ENCODE measurements at regions of chr22 and their contacts with region 1.

Region 1: DNA sequence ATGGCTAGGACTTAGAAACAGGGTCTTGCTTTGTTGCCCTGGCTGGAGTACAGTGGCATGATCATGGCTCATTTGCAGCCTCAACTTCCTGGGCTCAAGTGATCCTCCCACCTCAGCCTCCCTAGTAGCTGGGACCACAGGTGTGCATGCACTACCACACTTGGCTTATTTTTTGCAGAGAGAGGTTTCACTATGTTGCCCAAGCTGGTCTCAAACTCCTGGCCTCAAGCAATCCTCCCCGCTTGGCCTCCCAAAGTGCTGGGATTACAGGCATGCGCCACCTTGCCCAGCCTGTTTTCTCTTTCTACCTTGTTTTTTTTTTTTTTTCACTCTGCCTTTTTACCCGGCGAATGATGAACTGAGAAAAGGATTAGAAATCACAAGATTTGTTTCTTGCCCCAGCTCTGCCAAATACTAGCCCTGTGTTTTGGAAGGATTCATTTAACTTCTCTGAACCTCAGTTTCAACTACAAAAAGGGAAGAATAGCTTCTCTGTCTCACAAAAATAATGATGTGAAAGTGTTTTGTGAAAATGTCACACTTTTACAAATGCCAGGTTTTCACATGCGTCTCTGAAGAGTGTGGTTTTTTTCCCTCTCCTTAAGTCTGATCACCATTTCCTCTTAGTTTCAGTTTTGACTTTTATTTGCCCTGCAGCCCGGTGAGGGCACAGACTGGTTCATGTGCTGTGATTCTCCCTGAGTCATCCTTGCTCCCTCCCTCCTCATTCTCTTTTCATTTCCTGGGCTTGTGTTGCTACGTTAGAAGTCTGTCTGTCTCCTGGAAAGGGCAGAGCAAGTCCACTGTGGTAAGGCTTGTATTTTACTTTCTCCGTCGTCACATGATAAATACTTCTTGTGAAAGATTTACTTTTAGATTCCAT is 67.7 kb downstream of the BCL2L13 start:
- DNase-seq: peak; percentile 95
- H3K4me3 ChIP-seq: peak overlapping the region; percentile 27 to 38 (median 36)
- H3K27ac ChIP-seq: peak overlapping the region; percentile 71
- H3K4me1 ChIP-seq: peaks cover 19% of the 10 kb centered on the region
- H3K27me3 ChIP-seq: no peaks in the 10 kb centered on the region
- CTCF ChIP-seq: no peak

Region 2: DNA sequence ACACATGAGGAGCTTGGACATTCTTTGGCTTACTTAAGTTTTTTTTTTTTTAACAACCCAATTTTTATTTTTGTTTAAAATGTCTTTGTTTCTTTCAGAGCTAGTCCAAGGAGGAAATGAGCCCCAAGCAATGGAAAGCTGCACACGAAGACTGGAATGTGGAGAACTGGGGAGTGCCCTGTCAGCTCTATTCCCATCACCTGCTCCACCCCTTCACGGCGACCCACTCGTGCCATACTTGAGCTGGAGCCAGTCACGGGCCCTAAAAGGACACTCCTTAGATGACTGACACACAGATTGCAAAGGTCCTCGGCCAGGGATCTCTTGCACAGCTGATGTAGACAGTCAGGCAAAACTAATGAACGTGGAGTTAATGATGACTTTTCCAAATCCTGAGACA is 153.5 kb before region 1 on chr22:
- CTCF ChIA-PET with region 1: no interaction called
- dilution Hi-C with region 1: no loop called
- in situ Hi-C with region 1: no loop called
- intact Hi-C with region 1: loop called (anchors 5 kb)
- DNase-seq: no peak
- H3K4me3 ChIP-seq: no peak overlapping the region
- H3K27ac ChIP-seq: no peak overlapping the region
- H3K4me1 ChIP-seq: no peaks in the 10 kb centered on the region
- H3K27me3 ChIP-seq: no peaks in the 10 kb centered on the region
- CTCF ChIP-seq: no peak

Region 3: GRCh38 chr22:17606496-17606895 is 99.8 kb before region 1 on chr22:
- CTCF ChIA-PET with region 1: no interaction called
- dilution Hi-C with region 1: no loop called
- in situ Hi-C with region 1: no loop called
- intact Hi-C with region 1: no loop called
- DNase-seq: no peak
- H3K4me3 ChIP-seq: no peak overlapping the region
- H3K27ac ChIP-seq: no peak overlapping the region
- H3K4me1 ChIP-seq: no peaks in the 10 kb centered on the region
- H3K27me3 ChIP-seq: no peaks in the 10 kb centered on the region
- CTCF ChIP-seq: no peak

Region 4: DNA sequence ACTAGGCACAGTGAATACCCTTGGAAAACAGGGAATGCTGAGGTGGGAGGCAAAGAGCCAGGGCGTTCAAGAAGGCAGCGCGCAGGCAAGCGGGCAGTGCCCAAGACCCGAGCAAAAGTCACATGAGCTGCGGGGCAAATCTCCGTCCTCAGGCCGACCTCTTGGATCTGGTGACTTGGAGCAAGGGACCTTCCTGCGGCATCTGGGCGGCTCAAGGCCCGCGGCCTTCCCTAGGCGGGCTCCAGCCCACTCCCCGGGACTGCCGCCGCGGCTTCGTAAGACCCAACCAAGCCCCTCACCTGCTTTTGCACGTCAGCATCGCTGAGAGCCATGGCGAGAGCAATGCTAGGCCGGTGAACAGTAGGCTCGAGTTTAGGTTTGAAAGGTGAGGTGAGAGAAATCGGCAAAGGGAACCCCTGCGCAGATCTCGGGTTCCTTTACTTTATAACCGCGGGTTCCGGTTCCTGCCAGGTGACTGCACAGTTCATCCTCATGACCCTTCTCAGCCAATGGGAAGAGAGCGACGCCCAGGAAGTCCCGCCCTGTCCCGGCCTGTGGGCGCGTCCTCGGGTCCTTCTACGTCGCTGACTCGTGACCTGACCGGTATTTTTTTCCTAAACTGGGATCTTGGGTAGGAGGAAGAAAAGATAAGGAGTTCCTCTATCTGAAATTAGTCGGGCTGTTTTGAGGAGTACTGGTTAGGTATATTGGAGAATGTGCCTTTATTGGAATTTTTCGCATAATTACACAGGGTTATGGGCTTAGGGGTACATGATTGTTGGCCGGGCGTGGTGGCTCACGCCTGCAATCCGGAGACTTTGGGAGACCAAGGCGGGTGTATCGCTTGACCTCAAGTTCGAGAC is 77.7 kb before region 1 on chr22 and contains the start of gene ATP6V1E1:
- CTCF ChIA-PET with region 1: no interaction called
- dilution Hi-C with region 1: loop called (anchors 5 kb)
- in situ Hi-C with region 1: loop called in 1 of 2 experiments (anchors 10 kb)
- intact Hi-C with region 1: no loop called
- DNase-seq: peak; percentile 96
- H3K4me3 ChIP-seq: peak within 1 kb of the TSS; percentile 69 to 97 (median 93)
- H3K27ac ChIP-seq: peak within 1 kb of the TSS; percentile 97
- H3K4me1 ChIP-seq: peaks cover 21% of the 10 kb centered on the region
- H3K27me3 ChIP-seq: no peaks in the 10 kb centered on the region
- CTCF ChIP-seq: no peak
- total RNA-seq, gene ATP6V1E1: 118 to 148 TPM

Measured in mammary epithelial cell (primary cell).